ENCODE measurements at regions of chr22 and their contacts with region 1.

Region 1: DNA sequence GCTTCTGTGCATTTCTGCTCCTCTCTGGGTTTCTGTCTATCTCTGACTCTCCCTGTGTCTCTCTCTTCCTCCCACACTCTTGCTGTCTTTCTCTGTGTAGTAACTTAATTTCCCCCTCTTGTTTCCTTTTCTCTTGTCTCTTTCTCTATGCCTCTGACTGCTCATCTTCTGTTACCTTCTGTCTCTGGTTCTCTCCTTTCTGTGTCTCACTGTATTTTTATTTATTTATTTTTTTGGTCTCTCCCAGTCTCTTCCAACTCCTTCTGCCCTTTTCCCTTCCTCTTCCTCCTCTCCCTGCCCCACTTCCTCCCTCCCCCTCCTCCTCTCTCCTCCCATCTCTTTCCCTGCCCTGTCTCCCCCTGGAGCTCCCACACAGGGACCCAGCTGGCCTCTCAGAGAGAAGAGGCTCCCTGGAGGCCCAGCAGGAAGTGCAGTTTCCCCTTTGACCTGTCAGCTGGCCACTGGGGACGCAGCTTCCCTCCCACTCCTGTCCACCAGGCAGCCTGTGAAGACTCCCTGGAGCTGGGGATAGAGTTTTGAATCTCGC is 38.3 kb upstream of the MYH9 start:
- DNase-seq: no peak

Region 2: DNA sequence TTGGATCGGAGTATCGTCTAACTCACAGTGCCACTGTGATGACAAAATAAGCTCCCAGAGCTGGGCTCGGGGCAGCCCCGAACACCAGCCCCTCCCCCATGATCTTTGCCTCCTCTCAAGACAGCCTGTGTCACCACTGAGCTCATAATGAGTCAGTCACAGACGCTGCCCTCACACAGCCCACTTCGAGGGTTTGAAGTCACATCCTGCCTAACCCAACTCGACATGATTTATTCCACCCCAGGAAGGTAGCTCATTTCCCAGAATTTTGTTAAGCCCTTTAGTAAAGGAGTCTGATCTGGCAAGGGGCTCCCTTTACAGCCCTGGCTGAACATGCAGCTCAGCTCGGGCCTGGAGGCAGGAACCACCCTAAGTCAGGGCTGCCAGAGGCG is 61.0 kb before region 1 on chr22:
- intact Hi-C with region 1: no loop called
- DNase-seq: no peak

Region 3: DNA sequence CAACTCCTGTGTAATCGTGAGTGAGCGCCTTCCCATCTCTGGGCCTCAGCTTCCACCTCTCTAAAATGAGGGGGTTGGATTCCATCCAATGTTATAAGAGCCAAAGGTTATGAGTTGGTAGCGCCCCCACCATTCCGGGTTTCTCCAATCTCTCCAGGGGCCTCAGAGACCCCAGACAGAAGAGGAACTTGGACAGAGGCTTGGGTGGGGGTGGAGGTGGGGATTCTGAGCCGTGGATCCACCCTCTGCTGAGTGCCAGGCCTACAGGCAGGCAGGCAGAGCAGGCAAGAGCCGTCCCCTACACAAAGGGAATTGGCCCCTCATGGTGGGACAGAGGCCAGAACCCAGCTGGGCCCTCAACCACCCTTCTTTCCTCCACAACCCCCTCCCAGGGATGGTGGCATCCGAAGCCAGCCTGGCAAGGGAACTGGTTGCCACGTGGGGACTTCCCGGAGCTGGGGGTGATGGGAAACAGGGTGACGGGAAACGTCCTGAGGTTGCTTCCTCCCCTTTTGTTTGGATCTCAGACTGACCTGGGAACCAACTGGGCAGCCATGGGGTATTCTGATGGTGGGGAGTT is 23.6 kb after region 1 on chr22:
- intact Hi-C with region 1: loop called (anchors 1 kb)
- DNase-seq: no peak

Region 4: DNA sequence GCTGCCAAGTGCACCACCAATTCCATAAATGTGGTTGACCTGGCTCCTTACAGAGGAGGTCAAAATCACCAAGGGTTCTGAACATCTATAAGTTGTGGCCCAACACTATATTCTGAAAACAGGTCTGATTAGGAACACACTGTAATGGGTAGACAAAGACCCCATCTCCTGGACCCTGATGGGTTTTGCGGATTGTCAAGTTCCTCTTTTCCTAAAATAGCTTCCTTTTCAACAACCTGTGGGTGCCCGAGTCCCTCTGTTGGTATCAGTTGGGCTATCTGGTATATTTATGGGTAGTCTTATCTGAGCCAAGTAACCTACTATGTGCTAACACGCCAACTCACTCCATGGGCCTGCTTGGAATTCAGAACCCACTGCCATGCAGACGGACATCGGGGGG is 287.4 kb after region 1 on chr22:
- intact Hi-C with region 1: no loop called
- DNase-seq: no peak